CD14-positive monocyte (primary cell): ENCODE measurements at regions of chr11 and their contacts with region 1.

Region 1: GRCh38 chr11:10208131-10208575 is 85.9 kb downstream of the SBF2 start:
- DNase-seq: peak; percentile 32 to 61 (median 48)
- H3K4me3 ChIP-seq: no peak overlapping the region
- H3K4me3 Mint-ChIP-seq: no peak overlapping the region
- H3K27ac ChIP-seq: no peak overlapping the region
- H3K27ac Mint-ChIP-seq: no peak overlapping the region
- H3K4me1 ChIP-seq: no peaks in the 10 kb centered on the region
- H3K4me1 Mint-ChIP-seq: peaks cover 2% of the 10 kb centered on the region
- H3K27me3 ChIP-seq: no peaks in the 10 kb centered on the region
- H3K27me3 Mint-ChIP-seq: no peaks in the 10 kb centered on the region
- CTCF ChIP-seq: peak; percentile 81

Region 2: GRCh38 chr11:10633261-10633660 is 425.1 kb after region 1 on chr11:
- intact Hi-C with region 1: loop called in 1 of 2 experiments (anchors 5 kb)
- DNase-seq: no peak
- H3K4me3 ChIP-seq: no peak overlapping the region
- H3K4me3 Mint-ChIP-seq: no peak overlapping the region
- H3K27ac ChIP-seq: no peak overlapping the region
- H3K27ac Mint-ChIP-seq: no peak overlapping the region
- H3K4me1 ChIP-seq: peaks cover 10 to 12% of the 10 kb centered on the region in 2 donors
- H3K4me1 Mint-ChIP-seq: peaks cover 19% of the 10 kb centered on the region
- H3K27me3 ChIP-seq: no peaks in the 10 kb centered on the region
- H3K27me3 Mint-ChIP-seq: peaks cover 1% of the 10 kb centered on the region in 3 donors
- CTCF ChIP-seq: no peak